ENCODE measurements at regions of chr22 and their contacts with region 1.

Region 1: GRCh38 chr22:20449819-20450550 is 12.4 kb upstream of the SCARF2 start:
- DNase-seq: no peak
- H3K4me3 ChIP-seq: no peak overlapping the region
- H3K27ac ChIP-seq: no peak overlapping the region
- H3K4me1 ChIP-seq: no peaks in the 10 kb centered on the region
- H3K27me3 ChIP-seq: no peaks in the 10 kb centered on the region
- CTCF ChIP-seq: no peak
- EP300 ChIP-seq: no peak
- POLR2A ChIP-seq: no peak

Region 2: GRCh38 chr22:20412474-20413216 is 37.3 kb before region 1 on chr22:
- in situ Hi-C with region 1: loop called in 1 of 4 experiments (anchors 5 kb)
- intact Hi-C with region 1: no loop called
- DNase-seq: no peak
- H3K4me3 ChIP-seq: no peak overlapping the region
- H3K27ac ChIP-seq: no peak overlapping the region
- H3K4me1 ChIP-seq: no peaks in the 10 kb centered on the region
- H3K27me3 ChIP-seq: no peaks in the 10 kb centered on the region
- CTCF ChIP-seq: no peak
- EP300 ChIP-seq: no peak
- POLR2A ChIP-seq: no peak

Region 3: GRCh38 chr22:20555276-20555675 is 105.3 kb after region 1 on chr22:
- in situ Hi-C with region 1: no loop called
- intact Hi-C with region 1: no loop called
- DNase-seq: no peak
- H3K4me3 ChIP-seq: no peak overlapping the region
- H3K27ac ChIP-seq: no peak overlapping the region
- H3K4me1 ChIP-seq: peaks cover 29 to 54% (median 36%) of the 10 kb centered on the region in 4 donors
- H3K27me3 ChIP-seq: no peaks in the 10 kb centered on the region
- CTCF ChIP-seq: no peak
- EP300 ChIP-seq: no peak
- POLR2A ChIP-seq: no peak

Measured in transverse colon (tissue), 4 donors.